Activated naive CD4-positive, alpha-beta T cell treated with anti-CD3 and anti-CD28 coated beads, Interleukin-2, amount 10 ng/mL, durations not matched to agents 7 days and 5 days (primary cell): ENCODE measurements at regions of chr6 and their contacts with region 1.

Region 1: GRCh38 chr6:30396833-30397479 is 52.0 kb downstream of the RPP21 start:
- DNase-seq: peak; percentile 90
- H3K4me3 Mint-ChIP-seq: no peak overlapping the region
- H3K27ac Mint-ChIP-seq: no peak overlapping the region
- H3K4me1 Mint-ChIP-seq: no peaks in the 10 kb centered on the region
- H3K27me3 Mint-ChIP-seq: peaks cover 50% of the 10 kb centered on the region

Region 2: GRCh38 chr6:30219244-30219643 is 177.7 kb before region 1 on chr6:
- CTCF ChIA-PET with region 1: interaction called, 38 read pairs
- DNase-seq: peak; percentile 64
- H3K4me3 Mint-ChIP-seq: no peak overlapping the region
- H3K27ac Mint-ChIP-seq: no peak overlapping the region
- H3K4me1 Mint-ChIP-seq: peaks cover 19% of the 10 kb centered on the region
- H3K27me3 Mint-ChIP-seq: peaks cover 19% of the 10 kb centered on the region

Region 3: DNA sequence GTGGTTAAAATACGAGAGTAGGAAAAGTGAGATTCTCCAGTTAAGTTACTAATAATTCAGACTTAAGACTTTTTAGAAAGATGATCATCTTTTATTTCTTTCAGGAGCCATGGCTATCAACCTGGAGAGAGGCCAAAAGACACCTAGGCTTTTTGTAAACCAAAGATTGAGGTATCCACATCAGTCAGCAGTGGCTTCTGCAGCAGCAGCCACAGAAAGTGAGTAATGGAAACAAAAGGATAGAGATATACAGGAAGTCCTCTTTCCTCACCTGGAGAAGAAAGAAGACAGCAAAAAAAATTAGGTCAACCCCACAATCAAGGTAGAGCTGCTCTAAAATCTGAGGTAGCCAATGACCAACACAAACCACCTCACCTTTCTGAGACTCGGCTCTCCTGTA is 93.0 kb before region 1 on chr6:
- CTCF ChIA-PET with region 1: no interaction called
- DNase-seq: no peak
- H3K4me3 Mint-ChIP-seq: no peak overlapping the region
- H3K27ac Mint-ChIP-seq: no peak overlapping the region
- H3K4me1 Mint-ChIP-seq: peaks cover 13% of the 10 kb centered on the region
- H3K27me3 Mint-ChIP-seq: no peaks in the 10 kb centered on the region

Region 4: DNA sequence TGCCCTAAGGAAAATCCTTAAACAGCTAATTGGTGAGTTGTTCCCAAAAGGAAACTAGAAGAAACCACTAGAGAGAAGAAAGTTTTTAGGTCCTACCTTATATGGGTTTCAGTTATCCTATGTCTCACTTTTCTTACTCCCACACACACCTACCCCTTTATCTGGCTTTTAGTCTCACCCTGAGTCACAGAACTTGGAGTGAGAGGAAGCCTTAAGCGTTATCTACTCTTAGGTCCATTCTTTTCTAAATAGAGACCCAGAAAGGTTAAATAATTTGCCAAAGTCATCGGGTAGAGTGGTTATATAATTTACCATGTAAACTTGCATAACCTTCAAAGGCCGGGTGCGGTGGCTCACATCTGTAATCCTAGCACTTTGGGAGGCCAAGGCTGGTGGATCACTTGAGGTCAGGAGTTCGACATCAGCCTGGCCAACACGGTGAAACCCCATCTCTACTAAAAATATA is 56.3 kb before region 1 on chr6:
- CTCF ChIA-PET with region 1: no interaction called
- DNase-seq: no peak
- H3K4me3 Mint-ChIP-seq: no peak overlapping the region
- H3K27ac Mint-ChIP-seq: no peak overlapping the region
- H3K4me1 Mint-ChIP-seq: peaks cover 5% of the 10 kb centered on the region
- H3K27me3 Mint-ChIP-seq: no peaks in the 10 kb centered on the region

Region 5: GRCh38 chr6:30357678-30358540 is 39.0 kb before region 1 on chr6:
- CTCF ChIA-PET with region 1: interaction called, 17 read pairs
- DNase-seq: peak; percentile 71
- H3K4me3 Mint-ChIP-seq: peak overlapping the region; percentile 72
- H3K27ac Mint-ChIP-seq: no peak overlapping the region
- H3K4me1 Mint-ChIP-seq: peaks cover 8% of the 10 kb centered on the region
- H3K27me3 Mint-ChIP-seq: peaks cover 69% of the 10 kb centered on the region